Mammary epithelial cell (primary cell): ENCODE measurements at regions of chr5 and their contacts with region 1.

Region 1: GRCh38 chr5:8720506-8720905 is 825.4 kb downstream of the SEMA5A start:
- DNase-seq: no peak
- H3K4me3 ChIP-seq: no peak overlapping the region
- H3K27ac ChIP-seq: no peak overlapping the region
- H3K4me1 ChIP-seq: no peaks in the 10 kb centered on the region
- H3K27me3 ChIP-seq: no peaks in the 10 kb centered on the region
- CTCF ChIP-seq: no peak

Region 2: GRCh38 chr5:6950860-6951259 is 1769.6 kb before region 1 on chr5:
- CTCF ChIA-PET with region 1: no interaction called
- dilution Hi-C with region 1: no loop called
- in situ Hi-C with region 1: no loop called
- intact Hi-C with region 1: no loop called
- DNase-seq: no peak
- H3K4me3 ChIP-seq: no peak overlapping the region
- H3K27ac ChIP-seq: no peak overlapping the region
- H3K4me1 ChIP-seq: no peaks in the 10 kb centered on the region
- H3K27me3 ChIP-seq: no peaks in the 10 kb centered on the region
- CTCF ChIP-seq: no peak

Region 3: DNA sequence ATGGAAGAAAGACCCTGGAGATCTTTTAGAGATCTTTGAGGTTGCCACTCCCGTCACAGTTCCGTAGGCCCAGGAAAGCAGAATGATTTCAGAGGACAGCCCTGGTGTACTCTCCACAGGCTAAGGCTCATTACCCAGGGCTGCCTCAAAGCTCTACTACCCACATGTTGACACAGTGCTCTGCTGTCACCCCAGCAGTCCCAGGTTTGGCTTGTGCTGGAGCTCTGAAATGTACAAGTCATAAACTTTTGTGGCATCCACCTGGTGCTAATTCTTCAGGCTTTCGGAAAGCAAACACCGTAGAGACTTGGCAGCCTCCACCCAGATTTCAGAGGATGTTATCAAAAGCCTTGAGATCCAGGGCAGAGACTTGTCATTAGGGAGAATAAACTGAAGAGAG is 715.1 kb before region 1 on chr5:
- CTCF ChIA-PET with region 1: no interaction called
- dilution Hi-C with region 1: no loop called
- in situ Hi-C with region 1: no loop called
- intact Hi-C with region 1: no loop called
- DNase-seq: no peak
- H3K4me3 ChIP-seq: no peak overlapping the region
- H3K27ac ChIP-seq: no peak overlapping the region
- H3K4me1 ChIP-seq: no peaks in the 10 kb centered on the region
- H3K27me3 ChIP-seq: no peaks in the 10 kb centered on the region
- CTCF ChIP-seq: no peak

Region 4: DNA sequence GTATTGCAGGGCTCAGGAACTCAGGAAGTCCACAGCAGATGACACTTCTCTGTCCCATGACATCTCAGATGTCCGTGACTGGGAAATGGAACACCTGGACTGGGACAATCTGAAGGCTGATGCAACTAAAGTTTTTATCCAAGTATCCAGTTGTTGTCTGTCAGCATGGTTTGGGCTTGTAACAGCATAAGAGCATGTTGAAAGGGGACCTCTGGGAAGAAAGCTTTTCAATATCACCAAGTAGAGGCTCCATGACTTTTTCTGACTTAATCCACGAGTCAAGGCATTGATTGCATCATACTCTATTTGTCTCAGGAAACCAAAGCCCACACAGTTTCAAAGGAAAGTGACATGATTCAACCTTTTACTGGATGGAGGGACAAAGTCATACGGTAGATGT is 43.8 kb before region 1 on chr5:
- CTCF ChIA-PET with region 1: no interaction called
- dilution Hi-C with region 1: loop called (anchors 5 kb)
- in situ Hi-C with region 1: no loop called
- intact Hi-C with region 1: no loop called
- DNase-seq: no peak
- H3K4me3 ChIP-seq: no peak overlapping the region
- H3K27ac ChIP-seq: no peak overlapping the region
- H3K4me1 ChIP-seq: no peaks in the 10 kb centered on the region
- H3K27me3 ChIP-seq: no peaks in the 10 kb centered on the region
- CTCF ChIP-seq: no peak